ENCODE measurements at regions of chr2 and their contacts with region 1.

Region 1: GRCh38 chr2:178271629-178272333 is 77.5 kb downstream of the OSBPL6 start:
- DNase-seq: no peak
- ATAC-seq: no peak
- H3K4me3 ChIP-seq: no peak overlapping the region
- H3K27ac ChIP-seq: no peak overlapping the region
- H3K4me1 ChIP-seq: peaks cover 26 to 55% of the 10 kb centered on the region in 2 experiments
- H3K27me3 ChIP-seq: no peaks in the 10 kb centered on the region
- CTCF ChIP-seq: no peak
- EP300 ChIP-seq: no peak
- POLR2A ChIP-seq: no peak
- RAD21 ChIP-seq: no peak

Region 2: GRCh38 chr2:178194600-178195389 is 77.0 kb before region 1 on chr2:
- CTCF ChIA-PET with region 1: no interaction called
- POLR2A ChIA-PET with region 1: no interaction called
- in situ Hi-C with region 1: no loop called
- intact Hi-C with region 1: loop called (anchors 5 kb)
- DNase-seq: peak in 3 of 4 experiments; percentile 56 to 68 (median 64)
- ATAC-seq: peak; percentile 59
- H3K4me3 ChIP-seq: peak overlapping the region; percentile 80
- H3K27ac ChIP-seq: peak overlapping the region; percentile 58
- H3K4me1 ChIP-seq: peaks cover 18 to 19% of the 10 kb centered on the region in 2 experiments; a peak in 4 of 5 replicates
- H3K27me3 ChIP-seq: peaks cover 4% of the 10 kb centered on the region in 2 experiments; a peak in 3 of 5 replicates
- CTCF ChIP-seq: no peak
- EP300 ChIP-seq: no peak
- POLR2A ChIP-seq: 0 out of 2 replicates have a peak, but pooled peaks have one; percentile 47
- RAD21 ChIP-seq: no peak